ENCODE measurements at regions of chr1 and their contacts with region 1.

Region 1: DNA sequence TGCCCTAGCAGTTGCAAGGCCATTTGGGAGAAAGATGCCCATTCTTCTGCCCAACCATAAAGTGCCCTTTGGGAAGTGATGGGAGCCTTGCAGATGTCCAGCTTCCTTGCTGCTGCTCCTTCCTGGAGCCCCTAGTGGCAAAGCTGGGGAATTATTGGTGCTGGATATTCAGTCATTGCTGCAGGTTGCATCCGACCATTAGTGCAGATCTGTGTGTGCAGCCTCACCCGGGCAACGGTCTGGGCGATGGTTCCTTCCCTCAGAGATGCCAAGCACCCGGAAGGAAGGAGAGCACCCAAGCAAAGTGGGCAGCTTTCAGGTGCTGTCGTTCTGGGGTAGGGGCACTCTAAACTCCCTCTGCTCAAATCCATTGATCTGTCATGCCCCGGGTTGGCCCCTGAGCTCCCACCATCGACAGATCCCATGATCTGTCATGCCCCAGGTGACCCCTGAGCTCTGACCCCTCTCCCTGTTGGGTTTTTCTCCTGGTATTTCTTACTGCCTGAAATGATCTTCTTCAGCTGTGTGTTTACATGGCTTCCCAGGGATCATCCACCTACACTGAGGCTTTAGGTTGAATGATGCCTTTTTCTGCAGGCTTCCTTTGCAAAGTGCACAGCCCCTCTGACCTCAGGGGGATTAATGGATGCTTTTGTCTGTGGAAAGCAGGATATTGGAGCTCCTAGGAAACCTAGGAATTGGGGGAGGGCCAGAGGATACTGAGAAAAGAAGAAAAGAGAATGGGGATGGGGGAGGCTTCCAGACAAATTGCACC is 467.5 kb downstream of the PTPRU start:
- DNase-seq: no peak
- ATAC-seq: peak; percentile 71
- H3K4me3 ChIP-seq: no peak overlapping the region
- H3K27ac ChIP-seq: no peak overlapping the region
- H3K4me1 ChIP-seq: peaks cover 6% of the 10 kb centered on the region
- H3K27me3 ChIP-seq: no peaks in the 10 kb centered on the region
- CTCF ChIP-seq: peak; percentile 92

Region 2: GRCh38 chr1:29230553-29231378 is 473.0 kb before region 1 on chr1 and contains the start of gene MECR:
- CTCF ChIA-PET with region 1: no interaction called
- POLR2A ChIA-PET with region 1: no interaction called
- in situ Hi-C with region 1: no loop called
- intact Hi-C with region 1: loop called (anchors 10 kb)
- DNase-seq: peak; percentile 64
- ATAC-seq: peak; percentile 99
- H3K4me3 ChIP-seq: peak within 1 kb of the TSS; percentile 98 to 99
- H3K27ac ChIP-seq: peak within 1 kb of the TSS; percentile 86
- H3K4me1 ChIP-seq: peaks cover 10% of the 10 kb centered on the region
- H3K27me3 ChIP-seq: no peaks in the 10 kb centered on the region; the same call in 1 of the 2 replicates
- CTCF ChIP-seq: peak; percentile 54
- total RNA-seq, gene MECR: 25.7 TPM

Region 3: GRCh38 chr1:30310966-30311742 is 607.4 kb after region 1 on chr1:
- CTCF ChIA-PET with region 1: interaction called, 10 read pairs
- POLR2A ChIA-PET with region 1: no interaction called
- in situ Hi-C with region 1: no loop called
- intact Hi-C with region 1: no loop called
- DNase-seq: no peak
- ATAC-seq: no peak
- H3K4me3 ChIP-seq: no peak overlapping the region
- H3K27ac ChIP-seq: no peak overlapping the region
- H3K4me1 ChIP-seq: no peaks in the 10 kb centered on the region
- H3K27me3 ChIP-seq: peaks cover 14% of the 10 kb centered on the region
- CTCF ChIP-seq: no peak